ENCODE measurements at regions of chr13 and their contacts with region 1.

Region 1: GRCh38 chr13:74210693-74211393 is 76.6 kb upstream of the KLF12 start:
- DNase-seq: peak in 1 of 9 experiments; percentile 4
- ATAC-seq: no peak
- H3K4me3 ChIP-seq: no peak overlapping the region
- H3K4me3 Mint-ChIP-seq: no peak overlapping the region
- H3K27ac ChIP-seq: no peak overlapping the region
- H3K27ac Mint-ChIP-seq: no peak overlapping the region
- H3K4me1 ChIP-seq: no peaks in the 10 kb centered on the region
- H3K4me1 Mint-ChIP-seq: peaks cover 2% of the 10 kb centered on the region
- H3K27me3 ChIP-seq: no peaks in the 10 kb centered on the region
- H3K27me3 Mint-ChIP-seq: no peaks in the 10 kb centered on the region
- CTCF ChIP-seq: no peak

Region 2: GRCh38 chr13:74197677-74198429 is 13.0 kb before region 1 on chr13:
- CTCF ChIA-PET with region 1: no interaction called
- POLR2A ChIA-PET with region 1: no interaction called
- intact Hi-C with region 1: loop called in 1 of 2 experiments (anchors 2 kb)
- DNase-seq: no peak
- ATAC-seq: no peak
- H3K4me3 ChIP-seq: no peak overlapping the region
- H3K4me3 Mint-ChIP-seq: no peak overlapping the region
- H3K27ac ChIP-seq: no peak overlapping the region
- H3K27ac Mint-ChIP-seq: no peak overlapping the region
- H3K4me1 ChIP-seq: no peaks in the 10 kb centered on the region
- H3K4me1 Mint-ChIP-seq: peaks cover 18% of the 10 kb centered on the region
- H3K27me3 ChIP-seq: no peaks in the 10 kb centered on the region
- H3K27me3 Mint-ChIP-seq: no peaks in the 10 kb centered on the region
- CTCF ChIP-seq: no peak